Activated T-helper 2 cell treated with anti-CD3 and anti-CD28 coated beads, Interferon-gamma antibody, Interleukin-2, Interleukin-4, amounts not matched to agents 10 μg/mL and 5 μg/mL and 100 μg/mL, durations not matched to agents 14 hours and 24 hours and 36 hours (primary cell): ENCODE measurements at regions of chr2 and their contacts with region 1.

Region 1: GRCh38 chr2:112121682-112122254 is 16.4 kb upstream of the FBLN7 start:
- DNase-seq: no peak
- H3K4me3 Mint-ChIP-seq: no peak overlapping the region
- H3K27ac Mint-ChIP-seq: no peak overlapping the region
- H3K4me1 Mint-ChIP-seq: peaks cover 6% of the 10 kb centered on the region
- H3K27me3 Mint-ChIP-seq: no peaks in the 10 kb centered on the region

Region 2: GRCh38 chr2:112259509-112260294 is 137.9 kb after region 1 on chr2:
- intact Hi-C with region 1: loop called (anchors 1 kb)
- DNase-seq: peak; percentile 72
- H3K4me3 Mint-ChIP-seq: peak overlapping the region; percentile 0
- H3K27ac Mint-ChIP-seq: peak overlapping the region; percentile 61
- H3K4me1 Mint-ChIP-seq: peaks cover 15% of the 10 kb centered on the region
- H3K27me3 Mint-ChIP-seq: peaks cover 1% of the 10 kb centered on the region